SK-N-SH (cell line): ENCODE measurements at regions of chr12 and their contacts with region 1.

Region 1: DNA sequence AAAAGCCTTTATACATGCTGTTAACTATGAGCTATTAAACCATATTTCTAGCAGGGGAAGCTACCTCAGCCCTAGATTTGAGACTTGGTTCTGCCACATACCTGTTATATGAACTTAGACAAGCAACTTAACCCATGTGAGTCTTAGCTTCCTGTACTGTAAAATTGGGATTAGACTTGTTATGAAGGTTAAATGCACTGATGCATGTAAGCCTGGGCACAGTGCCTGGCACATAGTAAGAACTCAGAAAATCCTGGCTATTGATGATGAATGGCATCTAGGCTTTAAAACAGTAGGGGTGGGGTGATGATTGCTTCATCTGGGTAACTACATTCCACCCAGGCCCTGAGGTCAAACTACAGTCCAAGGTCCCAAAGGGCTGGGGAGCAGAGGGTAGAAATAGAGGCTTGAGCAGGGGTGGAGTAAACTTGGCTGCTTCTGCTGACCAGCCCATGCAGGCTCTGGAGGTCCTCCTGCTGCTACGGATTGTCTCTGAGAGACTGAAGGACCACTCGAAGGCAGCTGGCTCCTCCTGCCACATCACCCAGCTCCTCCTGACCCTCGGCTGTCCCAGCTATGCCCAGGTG is 11.3 kb downstream of the ESPL1 start:
- DNase-seq: no peak
- H3K4me3 ChIP-seq: no peak overlapping the region
- H3K27ac ChIP-seq: no peak overlapping the region
- H3K4me1 ChIP-seq: no peaks in the 10 kb centered on the region
- H3K27me3 ChIP-seq: no peaks in the 10 kb centered on the region
- CTCF ChIP-seq: no peak
- EP300 ChIP-seq: no peak
- RAD21 ChIP-seq: no peak

Region 2: GRCh38 chr12:53251477-53252348 is 27.7 kb before region 1 on chr12:
- CTCF ChIA-PET with region 1: interaction called, 11 read pairs
- POLR2A ChIA-PET with region 1: no interaction called
- DNase-seq: peak; percentile 97
- H3K4me3 ChIP-seq: peak overlapping the region; percentile 66 to 91
- H3K27ac ChIP-seq: peak overlapping the region; percentile 57 to 84; a peak in 3 of 4 replicates
- H3K4me1 ChIP-seq: peaks cover 0 to 16% of the 10 kb centered on the region in 2 experiments; a peak in 1 of 4 replicates
- H3K27me3 ChIP-seq: no peaks in the 10 kb centered on the region
- CTCF ChIP-seq: peak; percentile 59
- EP300 ChIP-seq: no peak
- RAD21 ChIP-seq: peak; percentile 81